ENCODE measurements at regions of chr5 and their contacts with region 1.

Region 1: DNA sequence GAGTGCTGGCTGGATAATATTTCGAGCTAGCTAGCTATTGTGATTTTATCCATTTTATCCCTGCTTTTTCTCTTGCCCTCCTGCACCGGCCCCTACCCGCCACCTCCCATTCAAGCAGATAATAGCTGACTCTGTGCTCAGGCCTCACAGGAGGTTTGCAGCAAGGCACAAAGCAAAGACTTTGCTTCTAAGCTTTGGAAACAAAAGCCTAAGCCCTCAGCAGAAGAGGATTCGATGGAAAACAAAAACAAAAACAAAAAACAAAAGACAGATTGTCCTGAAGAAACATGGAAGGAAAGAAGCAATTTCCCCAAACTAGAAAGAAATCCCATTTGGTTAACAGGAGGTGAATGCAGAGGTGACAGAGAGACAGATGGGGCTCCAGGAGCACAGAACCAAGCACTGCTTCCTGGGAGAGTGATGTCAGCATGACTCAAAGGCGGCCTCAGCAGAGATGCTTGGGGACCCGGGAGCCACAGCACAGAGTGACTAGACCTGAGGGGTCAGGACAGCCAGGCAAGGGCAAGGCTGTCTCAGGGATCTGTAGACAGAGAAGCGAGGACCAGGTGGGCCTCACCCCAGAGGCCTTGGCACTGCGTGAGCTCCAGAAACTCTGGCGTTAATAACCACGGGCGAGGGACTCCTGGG is 28.4 kb downstream of the MTX3 start:
- DNase-seq: no peak
- H3K4me3 ChIP-seq: no peak overlapping the region
- H3K27ac ChIP-seq: no peak overlapping the region
- H3K4me1 ChIP-seq: peaks cover 6% of the 10 kb centered on the region
- CTCF ChIP-seq: no peak

Region 2: DNA sequence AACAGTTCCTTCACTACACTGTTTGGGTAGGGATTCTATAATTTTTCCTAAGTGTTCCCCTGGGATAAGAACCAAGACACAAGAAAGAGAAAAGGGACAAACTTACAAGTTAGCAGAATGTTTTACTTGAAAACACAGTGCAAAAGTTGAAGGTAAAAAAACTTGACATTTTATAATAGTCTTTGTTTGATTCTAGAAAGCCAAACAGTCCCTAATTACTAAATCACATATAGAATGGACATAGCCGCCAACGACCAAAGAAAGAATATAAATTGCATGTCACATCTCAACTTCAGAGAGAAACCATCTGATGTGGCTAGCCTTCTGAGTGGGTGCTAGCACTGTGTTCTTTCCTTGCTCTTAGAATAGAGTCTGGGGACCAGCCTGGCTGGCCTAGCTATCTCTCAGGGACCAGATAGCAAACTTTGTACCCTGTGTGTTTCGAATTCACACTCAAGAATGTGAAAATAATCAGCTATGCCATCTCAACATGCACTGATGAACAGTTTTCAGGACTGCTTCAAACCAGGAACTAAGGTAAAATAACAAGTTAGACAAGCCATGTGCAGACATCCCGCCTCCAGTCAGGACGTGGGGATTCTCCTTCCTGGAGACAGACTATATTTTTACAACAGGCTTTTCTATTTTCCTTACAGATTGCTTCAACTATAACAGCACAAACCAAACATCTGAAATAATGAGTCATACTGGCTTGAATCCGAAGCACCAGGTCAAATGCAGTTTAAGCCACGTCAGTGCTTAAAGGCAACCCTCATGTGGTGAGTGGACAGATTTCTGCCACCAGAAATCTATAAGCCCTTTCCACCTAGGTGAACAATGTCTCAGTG is 1367.9 kb before region 1 on chr5:
- CTCF ChIA-PET with region 1: no interaction called
- POLR2A ChIA-PET with region 1: no interaction called
- intact Hi-C with region 1: no loop called
- DNase-seq: no peak
- H3K4me3 ChIP-seq: no peak overlapping the region
- H3K27ac ChIP-seq: no peak overlapping the region
- H3K4me1 ChIP-seq: peaks cover 7% of the 10 kb centered on the region
- CTCF ChIP-seq: no peak

Region 3: DNA sequence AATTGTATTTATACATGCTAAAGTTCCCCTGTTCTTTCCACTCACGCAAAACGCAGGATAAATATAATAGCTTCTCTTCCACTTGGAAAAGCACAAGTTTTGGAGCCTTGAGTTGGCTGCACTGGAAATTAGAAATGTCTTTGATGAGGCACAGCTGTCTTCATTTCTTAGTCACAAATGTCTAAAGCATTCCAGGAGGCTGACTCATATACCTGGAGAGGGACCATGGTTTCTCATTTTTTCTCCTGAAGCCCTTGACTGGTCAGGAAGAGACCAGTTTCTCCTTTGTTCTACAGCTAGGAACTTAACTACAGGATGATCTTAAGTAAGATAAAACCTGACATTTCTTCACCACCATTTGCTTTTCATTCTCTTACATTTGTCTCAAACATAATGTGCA is 12.2 kb after region 1 on chr5:
- CTCF ChIA-PET with region 1: no interaction called
- POLR2A ChIA-PET with region 1: interaction called, 12 read pairs
- intact Hi-C with region 1: no loop called
- DNase-seq: no peak
- H3K4me3 ChIP-seq: no peak overlapping the region
- H3K27ac ChIP-seq: no peak overlapping the region
- H3K4me1 ChIP-seq: peaks cover 13% of the 10 kb centered on the region
- CTCF ChIP-seq: no peak

Measured in OCI-LY7 (cell line).